Activated naive CD4-positive, alpha-beta T cell treated with anti-CD3 and anti-CD28 coated beads, Interleukin-2, amount 10 ng/mL, durations not matched to agents 7 days and 5 days (primary cell): ENCODE measurements at regions of chr9 and their contacts with region 1.

Region 1: GRCh38 chr9:124126571-124127289 is 115.2 kb downstream of the LHX2 start:
- DNase-seq: peak; percentile 87
- H3K4me3 Mint-ChIP-seq: no peak overlapping the region
- H3K27ac Mint-ChIP-seq: no peak overlapping the region
- H3K4me1 Mint-ChIP-seq: peaks cover 5% of the 10 kb centered on the region
- H3K27me3 Mint-ChIP-seq: peaks cover 47% of the 10 kb centered on the region

Region 2: DNA sequence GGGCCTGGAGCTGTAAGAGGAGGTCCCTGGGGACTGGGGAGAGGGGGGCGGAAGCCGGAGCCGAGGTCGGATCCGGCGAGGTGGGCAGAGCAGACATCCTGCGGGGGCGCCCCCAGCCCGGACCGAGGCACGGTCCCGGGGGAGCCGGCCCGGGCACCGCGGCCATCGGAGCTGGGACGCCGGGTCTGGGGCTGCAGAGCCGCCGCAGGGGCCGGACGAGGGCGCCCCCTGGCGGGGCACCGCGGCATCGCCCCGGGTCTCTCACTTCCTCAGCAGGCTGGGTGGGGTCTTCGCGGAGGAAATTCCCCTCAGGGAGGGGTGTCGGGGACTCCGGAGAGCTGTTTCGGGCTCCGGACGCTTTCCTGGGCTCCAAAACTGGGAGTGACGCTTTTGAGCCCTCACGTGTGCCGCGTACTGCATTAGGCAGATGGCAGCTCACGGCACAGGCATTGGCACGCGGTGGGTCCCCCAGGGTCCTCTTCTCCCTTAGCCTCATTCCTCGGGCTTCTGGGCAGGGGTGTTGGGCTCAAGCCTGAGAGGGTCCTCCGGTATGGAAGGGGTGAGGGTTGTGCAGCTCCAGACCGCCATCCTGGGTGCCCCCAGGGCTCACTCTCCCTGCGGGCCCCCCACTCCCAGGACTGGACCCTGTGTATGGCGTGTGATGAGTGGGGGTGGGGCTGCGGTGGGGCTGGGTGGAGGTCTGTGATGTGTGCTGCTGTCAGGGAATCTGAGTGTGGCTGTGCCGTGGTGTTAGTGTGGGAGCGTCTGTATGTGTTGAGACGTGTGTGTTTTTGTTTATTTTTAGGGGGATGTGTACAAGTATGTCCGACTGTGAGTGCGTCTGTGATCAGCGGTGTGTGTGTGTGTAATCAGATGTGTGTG is 85.6 kb before region 1 on chr9:
- CTCF ChIA-PET with region 1: no interaction called
- DNase-seq: peak; percentile 60
- H3K4me3 Mint-ChIP-seq: no peak overlapping the region
- H3K27ac Mint-ChIP-seq: no peak overlapping the region
- H3K4me1 Mint-ChIP-seq: peaks cover 7% of the 10 kb centered on the region
- H3K27me3 Mint-ChIP-seq: peaks cover 98% of the 10 kb centered on the region

Region 3: GRCh38 chr9:124312290-124313265 is 185.8 kb after region 1 on chr9:
- CTCF ChIA-PET with region 1: interaction called, 10 read pairs
- DNase-seq: no peak
- H3K4me3 Mint-ChIP-seq: no peak overlapping the region
- H3K27ac Mint-ChIP-seq: no peak overlapping the region
- H3K4me1 Mint-ChIP-seq: no peaks in the 10 kb centered on the region
- H3K27me3 Mint-ChIP-seq: no peaks in the 10 kb centered on the region

Region 4: GRCh38 chr9:124320062-124320973 is 193.6 kb after region 1 on chr9:
- CTCF ChIA-PET with region 1: interaction called, 20 read pairs
- DNase-seq: peak; percentile 63
- H3K4me3 Mint-ChIP-seq: no peak overlapping the region
- H3K27ac Mint-ChIP-seq: no peak overlapping the region
- H3K4me1 Mint-ChIP-seq: peaks cover 8% of the 10 kb centered on the region
- H3K27me3 Mint-ChIP-seq: no peaks in the 10 kb centered on the region

Region 5: GRCh38 chr9:124390812-124391658 is 264.3 kb after region 1 on chr9:
- CTCF ChIA-PET with region 1: interaction called, 15 read pairs
- DNase-seq: no peak
- H3K4me3 Mint-ChIP-seq: no peak overlapping the region
- H3K27ac Mint-ChIP-seq: no peak overlapping the region
- H3K4me1 Mint-ChIP-seq: peaks cover 12% of the 10 kb centered on the region
- H3K27me3 Mint-ChIP-seq: no peaks in the 10 kb centered on the region

Region 6: GRCh38 chr9:124532897-124533296 is 406.2 kb after region 1 on chr9:
- CTCF ChIA-PET with region 1: interaction called, 14 read pairs
- DNase-seq: no peak
- H3K4me3 Mint-ChIP-seq: no peak overlapping the region
- H3K27ac Mint-ChIP-seq: no peak overlapping the region
- H3K4me1 Mint-ChIP-seq: no peaks in the 10 kb centered on the region
- H3K27me3 Mint-ChIP-seq: peaks cover 7% of the 10 kb centered on the region

Region 7: GRCh38 chr9:124562328-124562727 is 435.6 kb after region 1 on chr9:
- CTCF ChIA-PET with region 1: no interaction called
- DNase-seq: no peak
- H3K4me3 Mint-ChIP-seq: no peak overlapping the region
- H3K27ac Mint-ChIP-seq: no peak overlapping the region
- H3K4me1 Mint-ChIP-seq: no peaks in the 10 kb centered on the region
- H3K27me3 Mint-ChIP-seq: peaks cover 8% of the 10 kb centered on the region